ENCODE measurements at regions of chr9 and their contacts with region 1.

Region 1: GRCh38 chr9:4987961-4988421 is 2.9 kb downstream of the JAK2 start:
- DNase-seq: no peak
- H3K4me3 ChIP-seq: peak overlapping the region; percentile 15
- H3K27ac ChIP-seq: no peak overlapping the region
- H3K4me1 ChIP-seq: peaks cover 67% of the 10 kb centered on the region
- H3K27me3 ChIP-seq: no peaks in the 10 kb centered on the region
- CTCF ChIP-seq: peak; percentile 76

Region 2: DNA sequence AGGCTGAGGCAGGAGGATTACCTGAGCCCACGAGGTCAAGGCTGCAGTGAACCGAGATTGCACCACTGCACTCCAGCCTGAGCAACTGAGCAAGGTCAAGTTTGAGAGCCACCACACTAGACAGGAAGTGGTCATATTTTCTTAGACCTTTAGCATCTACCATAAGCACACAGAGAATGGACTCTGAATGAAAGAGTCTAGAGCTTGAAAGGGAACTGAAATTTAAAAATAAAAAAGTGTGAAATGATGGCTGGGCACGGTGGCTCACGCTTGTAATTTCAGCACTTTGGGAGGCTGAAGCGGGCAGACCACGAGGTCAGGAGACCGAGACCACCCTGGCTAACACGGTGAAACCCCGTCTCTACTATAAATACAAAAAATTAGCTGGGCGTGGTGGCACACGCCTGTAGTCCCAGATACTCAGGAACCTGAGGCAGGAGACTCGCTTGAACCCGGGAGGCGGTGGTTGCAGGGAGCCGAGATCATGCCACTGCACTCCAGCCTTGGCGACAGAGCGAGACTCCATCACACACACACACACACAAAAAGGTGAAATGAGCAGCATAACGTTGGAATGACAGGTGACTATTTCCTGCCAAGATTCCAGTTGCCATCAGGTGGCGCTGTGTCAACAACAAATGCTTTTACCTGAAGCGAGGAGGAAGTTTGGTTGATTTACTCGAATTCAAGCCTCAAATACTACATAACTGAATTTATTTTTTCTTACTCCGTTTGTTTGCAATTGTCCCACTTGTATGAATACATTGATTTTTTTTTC is 225.7 kb before region 1 on chr9:
- intact Hi-C with region 1: loop called (anchors 2 kb)
- DNase-seq: peak; percentile 70
- H3K4me3 ChIP-seq: peak overlapping the region; percentile 48
- H3K27ac ChIP-seq: peak overlapping the region; percentile 51
- H3K4me1 ChIP-seq: peaks cover 19% of the 10 kb centered on the region
- H3K27me3 ChIP-seq: peaks cover 5% of the 10 kb centered on the region
- CTCF ChIP-seq: peak; percentile 85

Region 3: GRCh38 chr9:4923580-4924544 is 64.1 kb before region 1 on chr9:
- intact Hi-C with region 1: no loop called
- DNase-seq: no peak
- H3K4me3 ChIP-seq: no peak overlapping the region
- H3K27ac ChIP-seq: no peak overlapping the region
- H3K4me1 ChIP-seq: peaks cover 16% of the 10 kb centered on the region
- H3K27me3 ChIP-seq: no peaks in the 10 kb centered on the region
- CTCF ChIP-seq: peak; percentile 40